ENCODE measurements at regions of chr17 and their contacts with region 1.

Region 1: GRCh38 chr17:57597531-57598453 is 147.3 kb downstream of the CCDC182 start:
- DNase-seq: peak; percentile 58
- ATAC-seq: no peak
- H3K4me3 Mint-ChIP-seq: no peak overlapping the region
- H3K27ac Mint-ChIP-seq: peak overlapping the region; percentile 98
- H3K4me1 Mint-ChIP-seq: peaks cover 82% of the 10 kb centered on the region
- H3K27me3 Mint-ChIP-seq: no peaks in the 10 kb centered on the region

Region 2: GRCh38 chr17:57577751-57578607 is 19.8 kb before region 1 on chr17:
- CTCF ChIA-PET with region 1: interaction called, 10 read pairs
- POLR2A ChIA-PET with region 1: no interaction called
- DNase-seq: no peak
- ATAC-seq: no peak
- H3K4me3 Mint-ChIP-seq: no peak overlapping the region
- H3K27ac Mint-ChIP-seq: no peak overlapping the region
- H3K4me1 Mint-ChIP-seq: peaks cover 2% of the 10 kb centered on the region
- H3K27me3 Mint-ChIP-seq: no peaks in the 10 kb centered on the region

Region 3: DNA sequence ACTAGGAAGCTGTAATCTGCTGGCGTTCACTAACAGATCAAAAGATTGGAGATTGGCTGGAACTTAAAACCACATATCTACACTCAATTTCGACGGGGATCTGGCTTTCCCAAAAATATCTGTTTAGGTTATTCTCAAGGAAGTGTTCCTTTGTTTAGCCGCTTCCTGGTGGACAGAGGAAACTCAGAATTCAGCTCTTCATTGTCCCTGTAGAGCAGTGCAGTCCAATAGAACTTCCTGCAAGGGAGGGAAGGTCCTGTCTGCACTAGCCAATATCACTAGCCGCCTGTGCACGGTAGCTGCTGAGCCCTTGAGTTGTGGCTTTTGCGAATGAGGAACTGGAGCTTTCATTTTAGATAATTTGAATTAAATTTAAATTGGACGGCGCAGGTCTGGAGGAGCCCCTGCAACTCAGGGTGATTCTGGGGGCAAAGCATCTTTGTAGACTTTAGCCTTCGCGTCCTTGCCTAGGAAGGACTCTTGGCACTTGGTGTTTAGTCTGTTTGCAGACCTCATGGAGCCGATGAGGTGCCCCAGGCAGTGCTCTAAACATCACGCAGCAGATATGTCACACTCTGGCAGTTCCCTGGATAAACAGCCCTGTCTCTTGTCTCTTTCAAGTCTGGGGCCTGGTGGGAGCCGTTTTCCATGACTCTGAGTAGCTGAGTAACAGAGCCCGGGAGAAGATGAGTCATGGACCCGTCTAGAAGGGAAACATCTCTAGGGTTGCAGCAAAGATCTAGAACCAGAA is 25.1 kb after region 1 on chr17:
- CTCF ChIA-PET with region 1: interaction called, 15 read pairs
- POLR2A ChIA-PET with region 1: no interaction called
- DNase-seq: no peak
- ATAC-seq: no peak
- H3K4me3 Mint-ChIP-seq: no peak overlapping the region
- H3K27ac Mint-ChIP-seq: peak overlapping the region; percentile 27
- H3K4me1 Mint-ChIP-seq: peaks cover 41% of the 10 kb centered on the region
- H3K27me3 Mint-ChIP-seq: no peaks in the 10 kb centered on the region

Region 4: DNA sequence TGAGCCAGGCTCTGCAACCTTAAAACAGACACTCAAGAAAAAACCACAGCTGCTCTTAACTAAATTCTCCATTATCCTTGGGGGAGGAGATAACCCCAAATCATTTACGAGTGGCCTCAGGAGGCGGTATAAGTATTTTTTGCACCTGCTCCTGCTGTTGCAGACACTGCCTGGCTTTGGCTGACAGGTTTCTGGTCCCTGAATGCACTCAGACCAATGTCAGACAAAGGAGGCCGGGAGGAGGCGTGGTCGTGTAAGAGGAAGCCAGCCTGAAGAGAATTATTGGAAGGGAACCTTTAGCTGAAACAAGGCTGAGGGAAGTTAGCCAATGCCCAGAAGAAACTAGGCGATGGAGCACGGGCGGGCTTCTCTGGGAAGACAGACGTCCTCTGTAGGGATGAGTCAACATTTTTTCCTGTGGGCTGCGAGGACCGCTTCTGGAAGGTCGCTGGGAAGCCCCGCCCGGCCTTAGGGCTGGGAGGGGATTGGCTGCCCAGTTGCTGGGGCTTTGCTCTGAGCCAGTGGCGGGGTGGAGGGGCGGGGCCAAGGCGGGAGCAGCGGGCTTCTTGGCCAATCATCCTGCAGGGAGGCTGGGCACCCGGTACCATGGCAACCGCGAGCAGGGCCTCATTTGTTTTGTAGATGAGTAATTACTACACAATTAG is 65.0 kb after region 1 on chr17:
- CTCF ChIA-PET with region 1: interaction called, 196 read pairs
- POLR2A ChIA-PET with region 1: no interaction called
- DNase-seq: peak; percentile 27
- ATAC-seq: peak; percentile 46
- H3K4me3 Mint-ChIP-seq: no peak overlapping the region
- H3K27ac Mint-ChIP-seq: no peak overlapping the region
- H3K4me1 Mint-ChIP-seq: peaks cover 17% of the 10 kb centered on the region
- H3K27me3 Mint-ChIP-seq: no peaks in the 10 kb centered on the region

Region 5: DNA sequence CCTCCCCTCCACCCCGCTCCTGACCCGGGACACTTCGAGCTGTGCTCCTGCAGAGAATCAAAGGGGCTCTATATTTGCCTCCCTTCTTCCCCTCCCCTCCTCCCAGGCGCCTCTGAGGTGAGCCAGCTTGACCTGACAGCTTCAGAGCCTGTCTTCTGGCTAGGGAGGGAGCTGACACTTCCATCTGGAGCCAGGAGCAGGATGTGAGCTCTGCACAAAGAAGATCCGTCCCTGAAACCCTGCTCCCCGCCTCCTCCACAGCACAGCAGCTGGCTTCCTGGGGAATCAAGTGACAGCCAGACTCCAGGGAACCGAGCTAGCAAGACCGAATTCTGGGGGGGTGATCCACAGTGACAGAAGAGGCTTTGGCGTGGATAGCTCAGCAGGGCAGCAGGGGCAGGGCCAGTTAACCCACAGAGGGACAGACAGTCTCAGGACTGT is 110.1 kb after region 1 on chr17:
- CTCF ChIA-PET with region 1: no interaction called
- POLR2A ChIA-PET with region 1: no interaction called
- DNase-seq: no peak
- ATAC-seq: no peak
- H3K4me3 Mint-ChIP-seq: no peak overlapping the region
- H3K27ac Mint-ChIP-seq: no peak overlapping the region
- H3K4me1 Mint-ChIP-seq: no peaks in the 10 kb centered on the region
- H3K27me3 Mint-ChIP-seq: peaks cover 18% of the 10 kb centered on the region

Region 6: GRCh38 chr17:57747221-57748017 is 149.6 kb after region 1 on chr17:
- CTCF ChIA-PET with region 1: interaction called, 16 read pairs
- POLR2A ChIA-PET with region 1: no interaction called
- DNase-seq: peak; percentile 68
- ATAC-seq: peak; percentile 77
- H3K4me3 Mint-ChIP-seq: no peak overlapping the region
- H3K27ac Mint-ChIP-seq: no peak overlapping the region
- H3K4me1 Mint-ChIP-seq: peaks cover 29% of the 10 kb centered on the region
- H3K27me3 Mint-ChIP-seq: peaks cover 7% of the 10 kb centered on the region